GM12878 (cell line): ENCODE measurements at regions of chr14 and their contacts with region 1.

Region 1: DNA sequence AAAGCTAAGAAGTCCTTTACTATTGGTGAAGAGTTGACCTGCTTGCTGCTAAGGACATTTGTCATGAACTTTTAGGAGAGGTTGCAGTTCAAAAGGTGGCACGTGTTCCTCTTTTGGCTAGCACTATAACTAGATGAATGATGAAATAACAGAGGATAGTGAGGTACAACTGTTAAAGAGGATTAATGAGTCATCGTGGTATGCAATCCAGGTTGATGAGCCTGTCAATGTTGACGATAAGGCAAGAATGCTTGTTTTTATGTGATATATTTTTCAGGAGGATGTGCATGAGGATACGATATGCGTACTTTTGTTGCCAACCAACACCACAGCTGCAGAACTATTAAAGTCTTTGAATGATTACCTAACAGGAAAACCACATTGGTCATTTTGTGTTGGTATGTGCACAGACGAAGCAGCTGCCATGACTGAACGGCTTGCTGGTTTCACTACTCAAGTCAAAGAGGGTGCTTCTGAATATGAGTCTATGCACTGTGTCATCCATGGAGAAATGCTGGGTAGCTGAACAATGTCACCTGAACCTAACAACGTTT is 10.6 kb downstream of the CEP128 start:
- DNase-seq: peak; percentile 88
- ATAC-seq: peak; percentile 97
- H3K4me3 ChIP-seq: peak overlapping the region; percentile 53
- H3K27ac ChIP-seq: peak overlapping the region; percentile 47; the same call in 1 of the 2 replicates
- H3K4me1 ChIP-seq: peaks cover 29% of the 10 kb centered on the region
- H3K27me3 ChIP-seq: no peaks in the 10 kb centered on the region
- CTCF ChIP-seq: no peak
- EP300 ChIP-seq: peak; percentile 83 to 89
- POLR2A ChIP-seq: no peak
- RAD21 ChIP-seq: no peak

Region 2: DNA sequence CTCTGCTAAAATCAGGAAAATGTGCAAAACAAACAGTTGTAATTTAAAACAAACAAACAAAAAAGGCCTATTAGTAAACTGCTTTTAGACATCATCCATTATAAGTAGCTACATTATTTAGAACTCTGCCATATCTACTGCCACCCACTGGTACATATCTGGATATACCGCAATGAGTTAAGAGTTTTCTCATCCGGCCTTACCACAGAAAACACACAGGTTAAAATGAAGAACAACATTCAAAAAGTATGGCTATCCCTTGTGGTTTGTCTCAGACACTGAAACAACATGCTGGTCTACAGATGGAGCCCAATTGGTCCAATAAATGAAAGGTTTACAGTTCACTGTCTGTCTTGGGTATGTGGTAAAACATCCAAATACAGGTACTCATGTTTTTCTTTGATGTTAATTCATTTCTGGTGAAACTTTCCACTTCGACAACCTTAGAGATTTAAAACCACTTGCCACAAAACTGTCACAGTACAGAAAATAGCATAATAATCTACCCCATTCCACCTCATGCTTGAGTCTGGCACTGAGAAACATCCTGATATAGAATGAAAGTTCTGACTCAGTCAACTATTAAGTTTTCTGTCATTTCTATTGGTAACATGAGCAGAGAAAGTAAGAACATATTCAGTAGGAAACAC is 343.7 kb before region 1 on chr14:
- CTCF ChIA-PET with region 1: no interaction called
- POLR2A ChIA-PET with region 1: no interaction called
- RAD21 ChIA-PET with region 1: no interaction called
- SMC1A ChIA-PET with region 1: no interaction called
- in situ Hi-C with region 1: no loop called
- intact Hi-C with region 1: loop called (anchors 1 kb)
- DNase-seq: peak; percentile 89
- ATAC-seq: peak; percentile 97
- H3K4me3 ChIP-seq: no peak overlapping the region
- H3K27ac ChIP-seq: no peak overlapping the region
- H3K4me1 ChIP-seq: peaks cover 9% of the 10 kb centered on the region; the same call in 1 of the 2 replicates
- H3K27me3 ChIP-seq: no peaks in the 10 kb centered on the region
- CTCF ChIP-seq: peak; percentile 36 to 58 (median 46); a peak in 5 of 6 replicates
- EP300 ChIP-seq: peak; percentile 36 to 71; a peak in 2 of 4 replicates
- POLR2A ChIP-seq: no peak
- RAD21 ChIP-seq: peak; percentile 44

Region 3: GRCh38 chr14:80941241-80942182 is 10.6 kb after region 1 on chr14 and contains the start of gene CEP128:
- CTCF ChIA-PET with region 1: interaction called, 4 read pairs
- POLR2A ChIA-PET with region 1: interaction called, 9 read pairs
- RAD21 ChIA-PET with region 1: interaction called, 7 read pairs
- SMC1A ChIA-PET with region 1: interaction called, 30 read pairs
- in situ Hi-C with region 1: no loop called
- intact Hi-C with region 1: no loop called
- DNase-seq: peak; percentile 92
- ATAC-seq: peak; percentile 98
- H3K4me3 ChIP-seq: peak within 1 kb of the TSS; percentile 60
- H3K27ac ChIP-seq: peak within 1 kb of the TSS; percentile 78
- H3K4me1 ChIP-seq: no peaks in the 10 kb centered on the region
- H3K27me3 ChIP-seq: no peaks in the 10 kb centered on the region
- CTCF ChIP-seq: no peak
- EP300 ChIP-seq: no peak
- POLR2A ChIP-seq: peak; percentile 55
- RAD21 ChIP-seq: no peak
- polyA plus RNA-seq, gene CEP128: 1.1 to 2.4 TPM

Region 4: DNA sequence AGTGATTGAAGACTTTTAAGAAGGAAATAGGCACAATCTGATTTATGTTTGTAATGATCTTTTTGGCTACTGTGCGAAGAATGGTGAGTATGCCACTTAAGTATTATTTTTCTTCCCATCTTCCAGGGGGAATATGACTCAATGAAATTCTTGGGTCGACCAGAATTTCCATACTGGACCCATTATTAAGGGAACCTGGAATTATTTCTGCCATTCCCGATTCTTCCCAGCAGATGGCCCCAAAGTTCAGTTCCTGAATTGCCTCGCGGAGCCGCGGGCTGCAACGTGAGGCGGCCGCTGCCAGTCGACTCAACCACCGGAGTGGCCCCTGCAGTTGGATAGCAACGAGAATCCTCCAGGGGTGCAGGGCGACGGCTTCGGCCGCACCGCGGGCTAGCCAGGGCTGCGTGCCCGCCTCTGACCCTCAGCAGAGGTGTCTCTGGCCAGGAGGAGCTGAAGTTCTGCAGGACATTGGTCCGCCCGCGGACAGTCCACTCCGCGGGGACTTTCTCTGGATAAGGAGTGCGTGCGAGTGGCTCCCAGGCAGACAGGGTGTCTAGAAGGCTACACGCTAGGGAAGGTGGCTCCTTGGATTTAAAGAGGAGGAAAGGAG is 23.9 kb after region 1 on chr14:
- CTCF ChIA-PET with region 1: interaction called, 5 read pairs
- POLR2A ChIA-PET with region 1: no interaction called
- RAD21 ChIA-PET with region 1: interaction called, 7 read pairs
- SMC1A ChIA-PET with region 1: interaction called, 5 read pairs
- in situ Hi-C with region 1: no loop called
- intact Hi-C with region 1: loop called (anchors 1 kb)
- DNase-seq: no peak
- ATAC-seq: peak; percentile 46
- H3K4me3 ChIP-seq: no peak overlapping the region; the same call in 1 of the 2 replicates
- H3K27ac ChIP-seq: no peak overlapping the region
- H3K4me1 ChIP-seq: peaks cover 12% of the 10 kb centered on the region
- H3K27me3 ChIP-seq: peaks cover 0 to 5% of the 10 kb centered on the region in 2 experiments; a peak in 3 of 4 replicates
- CTCF ChIP-seq: peak; percentile 70 to 83 (median 71)
- EP300 ChIP-seq: no peak
- POLR2A ChIP-seq: no peak
- RAD21 ChIP-seq: peak; percentile 84

Region 5: GRCh38 chr14:81382517-81383132 is 451.7 kb after region 1 on chr14:
- CTCF ChIA-PET with region 1: no interaction called
- POLR2A ChIA-PET with region 1: no interaction called
- RAD21 ChIA-PET with region 1: no interaction called
- SMC1A ChIA-PET with region 1: no interaction called
- in situ Hi-C with region 1: no loop called
- intact Hi-C with region 1: no loop called
- DNase-seq: no peak
- ATAC-seq: no peak
- H3K4me3 ChIP-seq: no peak overlapping the region
- H3K27ac ChIP-seq: no peak overlapping the region
- H3K4me1 ChIP-seq: no peaks in the 10 kb centered on the region
- H3K27me3 ChIP-seq: no peaks in the 10 kb centered on the region
- CTCF ChIP-seq: no peak
- EP300 ChIP-seq: no peak
- POLR2A ChIP-seq: no peak
- RAD21 ChIP-seq: no peak